ENCODE measurements at regions of chr2 and their contacts with region 1.

Region 1: GRCh38 chr2:112054847-112055729 is at the start of gene TMEM87B:
- DNase-seq: peak; percentile 98
- H3K4me3 Mint-ChIP-seq: peak within 1 kb of the TSS; percentile 99
- H3K27ac Mint-ChIP-seq: peak within 1 kb of the TSS; percentile 99
- H3K4me1 Mint-ChIP-seq: peaks cover 36% of the 10 kb centered on the region
- H3K27me3 Mint-ChIP-seq: peaks cover 1% of the 10 kb centered on the region
- total RNA-seq, gene TMEM87B: 13.9 and 15.8 TPM in 2 replicates

Region 2: GRCh38 chr2:111883661-111884591 is 171.2 kb before region 1 on chr2 and contains the start of gene ANAPC1:
- intact Hi-C with region 1: loop called (anchors 2 kb)
- DNase-seq: peak; percentile 96
- H3K4me3 Mint-ChIP-seq: peak within 1 kb of the TSS; percentile 93
- H3K27ac Mint-ChIP-seq: peak within 1 kb of the TSS; percentile 93
- H3K4me1 Mint-ChIP-seq: peaks cover 12% of the 10 kb centered on the region
- H3K27me3 Mint-ChIP-seq: no peaks in the 10 kb centered on the region
- total RNA-seq, gene ANAPC1: 129 and 133 TPM in 2 replicates

Region 3: GRCh38 chr2:112032689-112033465 is 22.2 kb before region 1 on chr2:
- intact Hi-C with region 1: no loop called
- DNase-seq: no peak
- H3K4me3 Mint-ChIP-seq: no peak overlapping the region
- H3K27ac Mint-ChIP-seq: no peak overlapping the region
- H3K4me1 Mint-ChIP-seq: peaks cover 8% of the 10 kb centered on the region
- H3K27me3 Mint-ChIP-seq: peaks cover 15% of the 10 kb centered on the region

Region 4: DNA sequence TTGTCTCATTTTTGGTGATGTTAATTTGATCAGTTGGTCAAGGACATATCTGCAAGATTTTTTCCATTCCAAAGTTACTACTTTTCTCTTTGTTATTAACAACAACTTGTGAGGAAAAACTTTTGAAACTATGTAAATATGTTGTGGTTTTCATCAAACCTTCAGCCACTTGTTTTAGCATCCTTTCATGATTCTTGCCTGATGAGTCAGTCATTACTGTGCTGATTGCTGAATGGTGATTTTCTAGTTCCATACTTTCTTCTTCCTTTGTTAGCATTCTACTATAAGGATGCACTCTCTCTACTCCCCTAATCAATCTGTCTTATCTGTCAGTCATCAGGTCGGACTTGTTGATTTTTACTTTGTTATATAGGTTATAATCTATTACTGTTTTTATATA is 10.9 kb after region 1 on chr2:
- intact Hi-C with region 1: loop called (anchors 1 kb)
- DNase-seq: no peak
- H3K4me3 Mint-ChIP-seq: peak overlapping the region; percentile 56
- H3K27ac Mint-ChIP-seq: peak overlapping the region; percentile 86
- H3K4me1 Mint-ChIP-seq: peaks cover 41% of the 10 kb centered on the region
- H3K27me3 Mint-ChIP-seq: no peaks in the 10 kb centered on the region

Region 5: DNA sequence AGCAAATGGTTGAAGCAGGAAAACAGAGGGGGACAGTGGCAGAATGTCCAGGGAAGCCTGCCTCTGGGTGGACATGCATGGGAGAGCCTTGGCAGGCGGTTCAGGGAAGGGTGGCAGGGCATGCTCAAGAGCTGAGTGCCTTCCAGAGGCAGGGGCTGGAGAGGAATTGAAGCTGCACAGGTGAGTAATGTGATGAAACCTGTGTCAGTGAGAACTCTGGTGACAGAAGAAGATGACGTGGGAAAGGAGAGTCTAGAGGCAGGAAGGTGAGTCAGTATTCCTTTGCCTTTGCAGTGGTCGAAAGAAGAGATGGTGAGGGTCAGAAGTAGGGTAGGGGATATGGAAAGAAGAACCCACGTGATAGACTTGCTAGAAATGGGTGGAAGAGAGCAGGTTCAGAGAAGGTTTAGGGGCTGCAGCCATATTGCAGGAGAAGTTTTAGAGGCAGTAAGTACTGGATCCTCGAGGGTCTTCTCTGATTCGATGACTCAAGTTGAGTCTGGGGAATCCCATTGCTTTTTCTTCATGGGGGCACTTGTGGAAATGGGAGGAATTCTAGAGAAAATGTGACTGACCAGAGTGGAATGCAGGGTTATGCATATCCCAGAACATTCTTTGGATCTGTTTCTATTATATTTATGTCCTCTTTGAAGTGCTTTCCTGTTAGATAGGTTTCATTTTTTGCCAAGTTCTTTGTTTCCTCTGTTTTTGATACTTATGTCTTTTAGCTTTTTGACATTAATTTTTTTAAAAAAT is 37.4 kb after region 1 on chr2:
- intact Hi-C with region 1: loop called (anchors 5 kb)
- DNase-seq: no peak
- H3K4me3 Mint-ChIP-seq: no peak overlapping the region
- H3K27ac Mint-ChIP-seq: peak overlapping the region; percentile 3
- H3K4me1 Mint-ChIP-seq: peaks cover 20% of the 10 kb centered on the region
- H3K27me3 Mint-ChIP-seq: no peaks in the 10 kb centered on the region

Region 6: DNA sequence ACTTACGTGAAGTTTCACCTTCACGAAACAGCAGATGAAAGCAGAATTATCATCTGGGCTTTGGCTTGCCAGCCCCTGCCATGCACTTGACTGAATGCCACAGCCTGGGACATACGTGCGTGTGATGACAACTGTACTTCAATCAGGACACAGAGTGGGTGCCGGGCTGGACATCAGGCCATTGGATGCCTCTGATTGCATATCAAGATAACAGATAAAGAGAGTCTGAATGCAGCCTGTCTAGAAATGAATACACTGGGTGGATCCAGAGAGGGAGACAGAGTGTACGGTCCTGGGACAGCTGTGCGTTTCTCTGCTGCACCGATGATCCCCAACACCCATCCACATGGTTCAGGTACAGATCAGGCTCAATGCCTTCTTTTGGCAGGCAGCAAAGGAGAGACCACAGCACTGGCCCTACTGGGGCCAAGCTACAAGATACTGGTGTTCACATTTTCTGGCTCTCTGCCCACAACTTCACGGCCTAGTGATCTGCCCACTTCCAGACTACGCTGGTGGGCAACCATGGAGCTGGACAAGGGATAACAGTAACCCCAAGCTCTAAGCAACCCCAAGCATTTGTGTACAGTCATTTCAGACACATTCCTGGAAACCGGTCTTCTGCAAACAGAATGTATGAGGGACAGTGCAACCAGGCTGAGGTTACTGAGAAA is 118.7 kb after region 1 on chr2:
- intact Hi-C with region 1: no loop called
- DNase-seq: no peak
- H3K4me3 Mint-ChIP-seq: peak overlapping the region; percentile 33
- H3K27ac Mint-ChIP-seq: peak overlapping the region; percentile 48
- H3K4me1 Mint-ChIP-seq: peaks cover 21% of the 10 kb centered on the region
- H3K27me3 Mint-ChIP-seq: no peaks in the 10 kb centered on the region

Region 7: GRCh38 chr2:112187805-112188596 is 132.9 kb after region 1 on chr2:
- intact Hi-C with region 1: loop called (anchors 2 kb)
- DNase-seq: peak; percentile 91
- H3K4me3 Mint-ChIP-seq: peak overlapping the region; percentile 77
- H3K27ac Mint-ChIP-seq: peak overlapping the region; percentile 94
- H3K4me1 Mint-ChIP-seq: peaks cover 76% of the 10 kb centered on the region
- H3K27me3 Mint-ChIP-seq: peaks cover 2% of the 10 kb centered on the region

Region 8: DNA sequence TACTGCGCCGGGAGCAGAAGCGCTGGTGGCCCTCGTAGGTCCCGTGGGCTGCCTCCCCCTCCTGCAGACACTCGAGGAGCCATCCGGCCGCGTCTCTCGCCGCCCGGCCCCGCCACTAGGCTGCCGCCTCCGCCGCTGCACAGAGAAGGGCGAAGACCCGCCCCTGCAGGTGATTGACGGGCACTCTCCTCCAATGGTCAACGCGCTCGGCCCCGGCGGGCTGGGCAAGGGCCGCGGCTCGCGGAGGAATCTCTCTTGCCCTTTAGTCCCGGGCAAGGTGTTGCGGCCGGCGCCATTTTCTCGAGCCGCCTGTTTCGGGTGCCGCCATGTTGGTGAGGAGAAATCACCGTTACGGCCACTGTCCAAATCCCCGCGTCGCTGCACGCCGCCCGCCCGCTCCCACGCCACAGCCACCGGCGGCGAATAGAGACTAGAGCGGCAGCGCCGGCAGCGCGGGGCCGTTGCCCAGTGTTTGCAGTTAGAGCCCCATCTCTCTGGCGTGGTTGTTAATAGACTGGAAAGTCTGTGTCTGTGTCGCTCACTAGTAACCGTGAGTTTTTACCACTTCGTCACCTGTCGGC is 220.3 kb after region 1 on chr2 and contains the start of gene ZC3H6:
- intact Hi-C with region 1: loop called (anchors 1 kb)
- DNase-seq: peak; percentile 100
- H3K4me3 Mint-ChIP-seq: peak within 1 kb of the TSS; percentile 92
- H3K27ac Mint-ChIP-seq: peak within 1 kb of the TSS; percentile 99
- H3K4me1 Mint-ChIP-seq: peaks cover 8% of the 10 kb centered on the region
- H3K27me3 Mint-ChIP-seq: no peaks in the 10 kb centered on the region
- total RNA-seq, gene ZC3H6: 4.9 and 6.2 TPM in 2 replicates

Region 9: GRCh38 chr2:112481050-112481527 is 426.0 kb after region 1 on chr2:
- intact Hi-C with region 1: loop called (anchors 2 kb)
- DNase-seq: peak; percentile 96
- H3K4me3 Mint-ChIP-seq: peak overlapping the region; percentile 94
- H3K27ac Mint-ChIP-seq: peak overlapping the region; percentile 97
- H3K4me1 Mint-ChIP-seq: peaks cover 34% of the 10 kb centered on the region
- H3K27me3 Mint-ChIP-seq: peaks cover 2% of the 10 kb centered on the region

Measured in activated CD4-positive, alpha-beta T cell treated with anti-CD3 and anti-CD28 coated beads, Interleukin-2, amount 10 ng/mL, durations not matched to agents 24 days and 14 days (primary cell).